SK-N-SH (cell line): ENCODE measurements at regions of chr1 and their contacts with region 1.

Region 1: DNA sequence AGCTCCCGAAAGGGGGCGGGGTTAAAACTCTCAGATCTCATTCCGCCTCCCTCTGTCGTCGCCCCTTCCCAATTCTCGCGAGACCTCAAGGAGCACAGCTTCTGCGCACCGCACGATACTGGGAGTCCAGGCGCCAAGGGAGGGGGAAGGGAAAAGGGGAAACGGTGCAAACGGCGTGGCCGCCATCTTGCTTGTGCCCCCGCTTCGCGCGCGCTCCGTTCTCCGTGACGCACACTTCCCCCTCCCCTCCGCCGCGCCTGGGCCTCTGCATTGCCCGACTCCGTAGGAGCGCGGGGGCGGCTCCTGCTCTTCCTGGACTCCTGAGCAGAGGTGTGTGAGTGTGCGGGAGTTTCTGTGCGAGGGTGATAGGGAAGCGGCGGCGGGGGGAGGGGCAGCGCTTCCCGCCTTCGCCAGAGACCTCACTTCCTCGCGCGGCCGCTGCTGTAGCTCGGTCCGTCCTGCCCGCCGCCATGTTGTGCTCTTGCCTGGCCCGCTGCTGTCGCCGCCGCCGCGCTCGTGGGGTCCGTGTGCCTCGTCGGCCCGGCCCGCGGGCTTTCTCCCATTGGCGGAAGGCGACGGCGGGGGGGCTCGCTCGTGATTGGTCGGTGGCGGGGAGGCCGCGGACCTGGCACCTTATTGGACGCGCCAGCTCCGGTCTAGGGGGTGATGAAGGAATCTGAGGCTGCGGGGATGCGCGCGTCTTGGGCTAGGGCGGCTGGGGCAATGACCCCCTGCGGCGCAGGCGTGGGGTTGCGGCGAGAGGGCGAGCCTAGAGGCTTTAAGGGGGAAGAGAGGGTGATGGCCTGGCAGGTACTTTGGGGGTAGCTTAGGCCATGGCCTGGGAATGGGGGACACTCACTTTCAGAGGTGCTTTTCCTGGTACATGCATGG is at the start of gene NFYC:
- DNase-seq: peak; percentile 96
- H3K4me3 ChIP-seq: peak within 1 kb of the TSS; percentile 68 to 95
- H3K27ac ChIP-seq: peak within 1 kb of the TSS; percentile 97 to 99
- H3K4me1 ChIP-seq: peaks cover 17 to 21% of the 10 kb centered on the region in 2 experiments; a peak in 3 of 4 replicates
- H3K27me3 ChIP-seq: no peaks in the 10 kb centered on the region
- CTCF ChIP-seq: no peak
- EP300 ChIP-seq: no peak; a peak in 1 of 4 replicates
- RAD21 ChIP-seq: no peak
- polyA plus RNA-seq, gene NFYC: 68.0 and 72.4 TPM in 2 replicates

Region 2: DNA sequence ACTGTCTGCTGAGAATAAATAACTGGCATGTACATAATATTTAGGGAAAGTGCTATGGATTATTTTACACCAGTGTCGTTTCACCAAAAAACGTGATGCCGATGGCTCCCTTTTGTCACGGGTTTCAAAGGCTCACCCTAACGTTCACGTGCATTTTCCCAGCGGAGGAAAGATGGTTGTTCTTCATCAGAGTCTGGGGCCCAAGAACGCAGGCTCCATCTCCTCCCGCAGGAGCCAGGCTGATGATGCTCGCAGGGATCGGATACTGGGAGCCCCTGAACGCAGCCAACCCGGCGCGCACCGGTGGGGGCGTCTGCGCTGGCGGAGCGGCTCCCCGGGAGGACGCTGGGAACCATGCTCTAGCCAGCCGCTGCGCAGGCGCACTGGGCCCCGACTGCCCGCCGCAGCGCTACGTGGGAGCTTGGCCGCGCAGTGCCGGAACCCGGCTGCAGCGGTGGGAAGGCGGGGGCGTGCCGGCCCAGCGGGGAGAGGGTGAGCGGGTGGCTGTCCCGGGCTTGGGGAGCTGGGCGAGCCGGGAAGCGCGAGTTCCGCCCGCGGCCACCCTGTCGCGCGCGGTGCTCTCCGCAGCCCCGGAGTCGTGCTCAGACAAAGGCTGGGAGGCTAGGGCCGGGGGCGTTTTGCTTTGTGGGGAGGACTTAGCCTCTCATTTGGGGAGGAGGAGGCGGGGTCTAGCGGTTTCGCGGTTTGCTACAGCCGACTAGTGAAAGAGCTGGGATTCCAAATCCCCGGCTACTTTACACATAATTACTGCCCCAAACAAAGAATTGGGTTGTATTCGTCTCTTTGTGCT is 241.9 kb before region 1 on chr1 and contains the start of gene ZFP69B:
- CTCF ChIA-PET with region 1: no interaction called
- POLR2A ChIA-PET with region 1: no interaction called
- DNase-seq: peak; percentile 98
- H3K4me3 ChIP-seq: peak within 1 kb of the TSS; percentile 73 to 83
- H3K27ac ChIP-seq: peak within 1 kb of the TSS; percentile 79 to 97
- H3K4me1 ChIP-seq: peaks cover 0 to 2% of the 10 kb centered on the region in 2 experiments; a peak in 2 of 4 replicates
- H3K27me3 ChIP-seq: no peaks in the 10 kb centered on the region
- CTCF ChIP-seq: peak; percentile 14; the same call in 1 of the 2 replicates
- EP300 ChIP-seq: no peak
- RAD21 ChIP-seq: no peak
- polyA plus RNA-seq, gene ZFP69B: 1.7 and 2.1 TPM in 2 replicates

Region 3: GRCh38 chr1:40646315-40646714 is 45.5 kb before region 1 on chr1:
- CTCF ChIA-PET with region 1: no interaction called
- POLR2A ChIA-PET with region 1: no interaction called
- DNase-seq: no peak
- H3K4me3 ChIP-seq: no peak overlapping the region
- H3K27ac ChIP-seq: no peak overlapping the region
- H3K4me1 ChIP-seq: peaks cover 0 to 7% of the 10 kb centered on the region in 2 experiments; a peak in 1 of 4 replicates
- H3K27me3 ChIP-seq: no peaks in the 10 kb centered on the region
- CTCF ChIP-seq: no peak
- EP300 ChIP-seq: no peak
- RAD21 ChIP-seq: no peak

Region 4: GRCh38 chr1:40679165-40679953 is 12.4 kb before region 1 on chr1:
- CTCF ChIA-PET with region 1: interaction called, 3 read pairs
- POLR2A ChIA-PET with region 1: interaction called, 16 read pairs
- DNase-seq: no peak
- H3K4me3 ChIP-seq: no peak overlapping the region
- H3K27ac ChIP-seq: no peak overlapping the region
- H3K4me1 ChIP-seq: no peaks in the 10 kb centered on the region
- H3K27me3 ChIP-seq: no peaks in the 10 kb centered on the region
- CTCF ChIP-seq: no peak
- EP300 ChIP-seq: no peak
- RAD21 ChIP-seq: no peak

Region 5: GRCh38 chr1:40709100-40709801 is 17.5 kb after region 1 on chr1:
- CTCF ChIA-PET with region 1: interaction called, 3 read pairs
- POLR2A ChIA-PET with region 1: interaction called, 10 read pairs
- DNase-seq: peak; percentile 77
- H3K4me3 ChIP-seq: peak overlapping the region; percentile 72 to 87
- H3K27ac ChIP-seq: peak overlapping the region; percentile 69 to 95
- H3K4me1 ChIP-seq: peaks cover 20 to 24% of the 10 kb centered on the region in 2 experiments; a peak in 3 of 4 replicates
- H3K27me3 ChIP-seq: no peaks in the 10 kb centered on the region
- CTCF ChIP-seq: no peak
- EP300 ChIP-seq: no peak
- RAD21 ChIP-seq: no peak

Region 6: GRCh38 chr1:40802078-40802741 is 110.4 kb after region 1 on chr1:
- CTCF ChIA-PET with region 1: no interaction called
- POLR2A ChIA-PET with region 1: no interaction called
- DNase-seq: peak; percentile 99
- H3K4me3 ChIP-seq: peak overlapping the region; percentile 51 to 59
- H3K27ac ChIP-seq: no peak overlapping the region; a peak in 1 of 4 replicates
- H3K4me1 ChIP-seq: peaks cover 0 to 26% of the 10 kb centered on the region in 2 experiments; a peak in 1 of 4 replicates
- H3K27me3 ChIP-seq: no peaks in the 10 kb centered on the region
- CTCF ChIP-seq: no peak
- EP300 ChIP-seq: no peak
- RAD21 ChIP-seq: no peak